Naive thymus-derived CD8-positive, alpha-beta T cell (primary cell): ENCODE measurements at regions of chr6 and their contacts with region 1.

Region 1: DNA sequence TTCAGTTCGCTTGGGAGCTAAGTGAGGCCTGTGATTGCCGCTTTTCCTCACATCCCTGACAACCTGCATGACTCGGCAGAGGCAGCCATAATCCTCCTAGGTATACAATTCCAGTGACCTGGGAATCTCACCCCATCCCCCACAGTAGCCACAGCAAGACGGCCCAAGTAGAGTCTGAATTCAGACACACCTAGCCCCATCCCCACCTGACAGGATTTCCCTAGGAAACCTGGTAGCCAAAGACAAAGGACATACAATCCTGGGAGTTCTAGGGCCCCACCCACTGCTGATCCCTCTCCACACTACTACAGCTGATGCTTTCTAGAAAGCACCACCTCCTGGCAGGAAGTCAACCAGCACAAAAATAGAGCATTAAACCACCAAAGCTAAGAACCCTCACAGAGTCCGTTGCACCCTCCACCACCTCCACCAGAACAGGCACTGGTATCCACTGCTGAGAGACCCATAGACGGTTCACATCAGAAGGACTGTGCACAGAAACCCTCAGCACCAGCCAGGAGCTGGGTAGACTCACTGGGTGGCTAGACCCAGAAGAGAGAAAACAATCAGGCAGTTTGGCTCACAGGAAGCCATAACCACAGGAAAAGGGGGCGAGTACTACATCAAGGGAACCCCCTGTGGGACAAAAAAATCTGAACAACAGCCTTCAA is 17.9 kb upstream of the RUNX2 start:
- DNase-seq: peak in 9 of 10 donors; percentile 3 to 79 (median 55)
- ATAC-seq: peak; percentile 90 to 98
- H3K4me3 Mint-ChIP-seq: peak overlapping the region; percentile 33 to 79 (median 70)
- H3K27ac Mint-ChIP-seq: peak overlapping the region; percentile 83 to 98 (median 94)
- H3K4me1 Mint-ChIP-seq: peaks cover 42 to 81% (median 63%) of the 10 kb centered on the region in 4 donors
- H3K27me3 Mint-ChIP-seq: no peaks in the 10 kb centered on the region

Region 2: GRCh38 chr6:45278367-45278766 is 31.9 kb before region 1 on chr6:
- POLR2A ChIA-PET with region 1: no interaction called
- DNase-seq: no peak
- ATAC-seq: no peak
- H3K4me3 Mint-ChIP-seq: no peak overlapping the region
- H3K27ac Mint-ChIP-seq: no peak overlapping the region
- H3K4me1 Mint-ChIP-seq: peaks cover 0 to 9% (median 6%) of the 10 kb centered on the region in 4 donors
- H3K27me3 Mint-ChIP-seq: no peaks in the 10 kb centered on the region

Region 3: GRCh38 chr6:45320362-45320761 is 10.1 kb after region 1 on chr6:
- POLR2A ChIA-PET with region 1: interaction called, 18 read pairs
- DNase-seq: no peak
- ATAC-seq: no peak
- H3K4me3 Mint-ChIP-seq: peak overlapping the region in 4 of 10 donors; percentile 18 to 61 (median 41)
- H3K27ac Mint-ChIP-seq: peak overlapping the region in 8 of 10 donors; percentile 60 to 93 (median 76)
- H3K4me1 Mint-ChIP-seq: peaks cover 30 to 60% (median 46%) of the 10 kb centered on the region in 4 donors
- H3K27me3 Mint-ChIP-seq: no peaks in the 10 kb centered on the region

Region 4: GRCh38 chr6:45327956-45328522 is 17.8 kb after region 1 on chr6 and contains the start of gene RUNX2:
- POLR2A ChIA-PET with region 1: interaction called, 18 read pairs
- DNase-seq: peak in 8 of 10 donors; percentile 12 to 64 (median 44)
- ATAC-seq: peak; percentile 83 to 88
- H3K4me3 Mint-ChIP-seq: peak within 1 kb of the TSS; percentile 83 to 97 (median 91)
- H3K27ac Mint-ChIP-seq: peak within 1 kb of the TSS; percentile 77 to 97 (median 94)
- H3K4me1 Mint-ChIP-seq: peaks cover 20 to 80% (median 66%) of the 10 kb centered on the region in 4 donors
- H3K27me3 Mint-ChIP-seq: no peaks in the 10 kb centered on the region
- polyA plus RNA-seq, gene RUNX2: 31.3 to 44.3 (median 42.5) TPM